Right ventricle myocardium inferior (tissue), 1 donor: ENCODE measurements at regions of chr21 and their contacts with region 1.

Region 1: GRCh38 chr21:37358397-37358796 is 8.2 kb upstream of the DYRK1A start:
- DNase-seq: no peak
- ATAC-seq: peak; percentile 31

Region 2: GRCh38 chr21:37292941-37293340 is 65.5 kb before region 1 on chr21:
- intact Hi-C with region 1: loop called (anchors 5 kb)
- DNase-seq: no peak
- ATAC-seq: no peak